Prostate gland (tissue), 2 donors: ENCODE measurements at regions of chr20 and their contacts with region 1.

Region 1: GRCh38 chr20:44805979-44806620 is 4.2 kb downstream of the RIMS4 start:
- DNase-seq: no peak
- H3K4me3 ChIP-seq: no peak overlapping the region
- H3K27ac ChIP-seq: no peak overlapping the region
- H3K4me1 ChIP-seq: no peaks in the 10 kb centered on the region
- H3K27me3 ChIP-seq: peaks cover 8% of the 10 kb centered on the region
- CTCF ChIP-seq: no peak
- POLR2A ChIP-seq: no peak

Region 2: GRCh38 chr20:44747166-44748004 is 58.7 kb before region 1 on chr20:
- intact Hi-C with region 1: loop called (anchors 5 kb)
- DNase-seq: peak; percentile 71
- H3K4me3 ChIP-seq: no peak overlapping the region
- H3K27ac ChIP-seq: no peak overlapping the region
- H3K4me1 ChIP-seq: no peaks in the 10 kb centered on the region
- H3K27me3 ChIP-seq: no peaks in the 10 kb centered on the region
- CTCF ChIP-seq: peak in 3 of 4 experiments; percentile 61 to 71 (median 66)
- POLR2A ChIP-seq: no peak

Region 3: DNA sequence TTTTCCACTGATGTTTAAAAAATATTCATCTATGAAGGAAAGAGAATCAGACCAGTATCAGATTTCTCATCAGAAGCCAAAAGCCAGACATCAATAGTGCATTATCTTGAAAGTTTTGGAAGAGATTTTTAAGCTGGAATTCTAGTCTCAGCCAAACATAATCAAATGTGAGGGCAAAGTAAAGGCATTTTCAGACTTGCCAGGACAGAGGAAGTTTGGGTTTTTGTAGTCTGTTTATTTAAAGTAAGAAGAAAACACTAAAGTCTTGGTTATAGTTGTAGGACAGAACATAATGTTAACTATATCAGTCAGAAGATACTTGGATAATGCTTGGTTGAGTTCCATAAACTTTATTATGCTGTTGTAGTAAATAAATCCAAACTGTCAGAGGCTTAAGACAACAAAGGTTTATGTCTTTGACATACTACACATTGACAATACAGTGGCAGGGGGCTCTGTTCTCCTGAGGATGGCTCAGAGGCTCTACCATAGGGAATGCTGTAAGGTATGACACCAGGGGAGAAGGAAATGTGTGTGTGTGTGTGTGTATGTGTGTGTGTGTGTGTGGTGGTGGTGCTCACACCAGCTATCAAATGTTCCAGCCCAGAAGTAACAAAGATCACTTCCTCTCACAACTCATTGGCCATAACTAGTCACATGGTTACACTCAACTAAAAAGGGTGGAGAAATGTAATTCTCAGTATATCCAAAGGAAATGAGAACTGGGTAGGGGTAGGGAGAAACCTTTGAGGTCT is 52.7 kb after region 1 on chr20:
- intact Hi-C with region 1: loop called (anchors 5 kb)
- DNase-seq: no peak
- H3K4me3 ChIP-seq: no peak overlapping the region
- H3K27ac ChIP-seq: no peak overlapping the region
- H3K4me1 ChIP-seq: no peaks in the 10 kb centered on the region
- H3K27me3 ChIP-seq: no peaks in the 10 kb centered on the region
- CTCF ChIP-seq: no peak
- POLR2A ChIP-seq: no peak